ENCODE measurements at regions of chr10 and their contacts with region 1.

Region 1: DNA sequence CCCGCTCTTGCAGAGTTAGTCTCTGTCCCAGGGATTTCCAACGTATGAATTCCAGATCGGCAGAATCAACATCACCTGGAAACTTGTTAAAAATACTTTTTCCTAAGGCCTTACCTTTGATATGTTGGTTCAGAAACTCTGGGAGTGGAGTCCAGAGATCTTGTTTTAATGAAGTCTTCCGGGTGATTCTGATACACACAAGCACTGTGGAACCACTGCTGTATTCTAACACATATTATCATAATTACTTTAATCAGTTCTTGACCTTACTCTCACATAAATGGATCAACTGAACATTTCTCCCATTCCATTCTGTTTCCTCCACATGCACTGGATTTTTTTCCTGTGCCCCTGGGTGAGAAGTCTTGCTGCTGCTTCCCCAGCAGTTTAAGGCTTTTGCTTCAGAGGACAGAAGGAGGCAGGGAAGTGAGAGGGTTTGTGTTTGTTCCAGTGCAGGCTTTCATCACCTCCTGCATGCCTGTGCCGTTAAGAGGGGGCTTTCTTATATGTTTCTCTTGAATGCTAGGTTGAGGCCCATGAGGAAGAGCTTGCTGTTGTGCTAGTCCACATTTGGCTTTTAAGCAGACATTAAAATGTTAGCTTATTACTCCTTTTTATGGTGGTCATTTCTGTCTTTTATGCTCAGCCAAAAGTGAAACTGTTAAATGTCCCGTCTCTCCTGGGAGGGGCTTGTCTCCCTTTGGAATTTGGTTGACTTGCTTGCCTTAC is 32.4 kb downstream of the CCSER2 start:
- DNase-seq: peak; percentile 34
- ATAC-seq: peak; percentile 77
- H3K4me3 ChIP-seq: peak overlapping the region; percentile 71
- H3K27ac ChIP-seq: peak overlapping the region; percentile 82; the same call in 1 of the 2 replicates
- H3K4me1 ChIP-seq: peaks cover 8% of the 10 kb centered on the region
- H3K27me3 ChIP-seq: no peaks in the 10 kb centered on the region
- CTCF ChIP-seq: no peak
- POLR2A ChIP-seq: no peak
- RAD21 ChIP-seq: no peak

Region 2: GRCh38 chr10:84296091-84296981 is 64.5 kb before region 1 on chr10:
- CTCF ChIA-PET with region 1: no interaction called
- POLR2A ChIA-PET with region 1: no interaction called
- dilution Hi-C with region 1: no loop called
- in situ Hi-C with region 1: no loop called
- intact Hi-C with region 1: loop called (anchors 5 kb)
- DNase-seq: peak; percentile 98
- ATAC-seq: peak; percentile 94
- H3K4me3 ChIP-seq: no peak overlapping the region
- H3K27ac ChIP-seq: peak overlapping the region; percentile 62
- H3K4me1 ChIP-seq: peaks cover 13% of the 10 kb centered on the region
- H3K27me3 ChIP-seq: no peaks in the 10 kb centered on the region
- CTCF ChIP-seq: no peak
- POLR2A ChIP-seq: peak; percentile 73
- RAD21 ChIP-seq: peak; percentile 15

Region 3: GRCh38 chr10:84375011-84375410 is 14.2 kb after region 1 on chr10:
- CTCF ChIA-PET with region 1: interaction called, 10 read pairs
- POLR2A ChIA-PET with region 1: no interaction called
- dilution Hi-C with region 1: no loop called
- in situ Hi-C with region 1: no loop called
- intact Hi-C with region 1: no loop called
- DNase-seq: peak; percentile 69
- ATAC-seq: 0 out of 2 replicates have a peak, but pooled peaks have one; percentile 32
- H3K4me3 ChIP-seq: no peak overlapping the region
- H3K27ac ChIP-seq: no peak overlapping the region
- H3K4me1 ChIP-seq: no peaks in the 10 kb centered on the region
- H3K27me3 ChIP-seq: no peaks in the 10 kb centered on the region
- CTCF ChIP-seq: peak; percentile 66
- POLR2A ChIP-seq: no peak
- RAD21 ChIP-seq: peak; percentile 82

Region 4: DNA sequence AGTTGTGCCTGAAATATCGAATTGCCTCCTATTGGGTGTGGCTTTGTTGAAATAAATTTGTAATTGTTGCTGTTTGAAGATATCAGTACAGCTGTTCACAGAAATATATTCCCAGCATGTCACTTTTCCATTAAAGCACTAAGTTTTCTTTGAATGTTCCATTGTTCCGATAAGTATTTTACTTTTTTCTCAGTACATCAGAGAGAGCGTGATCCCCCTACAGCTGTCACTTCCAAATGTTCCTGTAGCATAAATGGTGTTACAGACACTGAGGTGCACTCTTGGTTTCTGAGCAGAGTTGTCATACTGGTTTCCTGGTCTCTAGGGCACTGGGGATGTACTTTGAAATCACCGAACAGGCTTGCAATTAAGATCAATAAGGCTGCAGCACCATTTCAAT is 156.8 kb after region 1 on chr10:
- CTCF ChIA-PET with region 1: no interaction called
- POLR2A ChIA-PET with region 1: no interaction called
- dilution Hi-C with region 1: no loop called
- in situ Hi-C with region 1: no loop called
- intact Hi-C with region 1: no loop called
- DNase-seq: no peak
- ATAC-seq: no peak
- H3K4me3 ChIP-seq: no peak overlapping the region
- H3K27ac ChIP-seq: no peak overlapping the region
- H3K4me1 ChIP-seq: no peaks in the 10 kb centered on the region
- H3K27me3 ChIP-seq: no peaks in the 10 kb centered on the region
- CTCF ChIP-seq: no peak
- POLR2A ChIP-seq: no peak
- RAD21 ChIP-seq: no peak

Region 5: DNA sequence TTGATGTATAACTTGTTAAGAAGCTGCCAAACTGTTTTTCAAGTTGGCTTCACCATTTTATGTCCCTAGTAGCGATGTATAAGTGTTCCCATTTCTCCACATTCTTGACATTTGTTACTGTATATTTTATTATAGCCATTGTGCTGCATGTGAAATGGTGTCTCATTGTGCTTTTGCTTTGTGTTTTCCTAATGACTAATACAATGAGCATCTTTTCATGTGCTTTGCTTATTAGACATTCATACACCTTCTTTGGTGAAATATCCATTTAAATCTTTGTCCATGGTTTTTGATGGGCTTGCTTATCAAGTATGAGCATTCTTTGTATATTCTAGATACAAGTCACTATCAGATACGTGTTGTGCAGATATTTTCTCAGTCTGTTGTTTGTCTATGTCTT is 170.6 kb after region 1 on chr10:
- CTCF ChIA-PET with region 1: no interaction called
- POLR2A ChIA-PET with region 1: no interaction called
- dilution Hi-C with region 1: no loop called
- in situ Hi-C with region 1: loop called (anchors 5 kb)
- intact Hi-C with region 1: no loop called
- DNase-seq: no peak
- ATAC-seq: no peak
- H3K4me3 ChIP-seq: no peak overlapping the region
- H3K27ac ChIP-seq: no peak overlapping the region
- H3K4me1 ChIP-seq: no peaks in the 10 kb centered on the region
- H3K27me3 ChIP-seq: no peaks in the 10 kb centered on the region
- CTCF ChIP-seq: no peak
- POLR2A ChIP-seq: no peak
- RAD21 ChIP-seq: no peak

Measured in IMR-90 (cell line).